ENCODE measurements at regions of chr17 and their contacts with region 1.

Region 1: DNA sequence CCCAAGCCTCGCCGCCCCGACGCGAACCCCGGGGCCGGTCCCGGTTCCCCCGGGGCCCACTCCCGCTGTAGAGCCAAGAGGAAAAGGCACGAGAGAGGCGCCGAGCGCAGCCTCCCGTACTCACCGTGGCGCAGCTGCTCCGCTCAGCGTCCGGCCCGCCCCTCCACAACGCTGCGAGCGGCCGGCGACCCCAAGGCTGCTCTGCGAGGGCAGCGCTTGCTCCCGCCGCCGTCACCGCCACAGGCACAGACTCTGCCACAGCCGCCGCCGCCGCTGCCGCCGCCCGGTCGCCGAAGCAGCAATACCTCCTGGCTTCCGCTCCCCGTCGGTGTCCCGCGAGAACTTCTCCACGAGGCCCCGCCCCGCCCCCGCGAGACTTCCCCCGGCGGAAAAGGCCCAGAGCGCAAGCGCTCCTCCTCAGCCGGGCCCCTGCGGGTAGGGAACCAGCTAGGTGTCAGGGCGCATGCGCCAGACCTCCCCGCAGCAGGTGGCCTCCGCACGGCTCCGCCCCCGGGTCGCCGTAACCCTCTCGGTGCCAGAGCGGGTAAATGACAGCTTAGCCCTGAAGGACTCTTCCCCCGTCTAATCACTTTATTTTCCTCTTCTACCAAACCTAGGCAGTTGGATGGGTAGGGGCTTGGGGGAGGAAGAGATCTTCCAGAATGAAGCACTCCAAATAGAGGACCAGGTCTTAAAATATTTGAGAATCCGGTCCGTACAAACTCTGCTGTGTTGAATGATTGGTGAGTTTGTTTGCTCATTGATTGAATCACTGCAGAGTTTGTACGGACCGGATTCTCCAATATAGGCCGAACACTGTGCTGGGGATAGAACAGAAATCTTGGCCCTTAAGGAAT is at the start of gene GRB2:
- DNase-seq: peak; percentile 100
- ATAC-seq: peak; percentile 81
- H3K4me3 Mint-ChIP-seq: peak within 1 kb of the TSS; percentile 99
- H3K27ac Mint-ChIP-seq: peak within 1 kb of the TSS; percentile 97
- H3K4me1 Mint-ChIP-seq: peaks cover 43% of the 10 kb centered on the region
- H3K27me3 Mint-ChIP-seq: no peaks in the 10 kb centered on the region
- CTCF ChIP-seq: no peak
- total RNA-seq, gene GRB2: 307 and 320 TPM in 2 replicates

Region 2: DNA sequence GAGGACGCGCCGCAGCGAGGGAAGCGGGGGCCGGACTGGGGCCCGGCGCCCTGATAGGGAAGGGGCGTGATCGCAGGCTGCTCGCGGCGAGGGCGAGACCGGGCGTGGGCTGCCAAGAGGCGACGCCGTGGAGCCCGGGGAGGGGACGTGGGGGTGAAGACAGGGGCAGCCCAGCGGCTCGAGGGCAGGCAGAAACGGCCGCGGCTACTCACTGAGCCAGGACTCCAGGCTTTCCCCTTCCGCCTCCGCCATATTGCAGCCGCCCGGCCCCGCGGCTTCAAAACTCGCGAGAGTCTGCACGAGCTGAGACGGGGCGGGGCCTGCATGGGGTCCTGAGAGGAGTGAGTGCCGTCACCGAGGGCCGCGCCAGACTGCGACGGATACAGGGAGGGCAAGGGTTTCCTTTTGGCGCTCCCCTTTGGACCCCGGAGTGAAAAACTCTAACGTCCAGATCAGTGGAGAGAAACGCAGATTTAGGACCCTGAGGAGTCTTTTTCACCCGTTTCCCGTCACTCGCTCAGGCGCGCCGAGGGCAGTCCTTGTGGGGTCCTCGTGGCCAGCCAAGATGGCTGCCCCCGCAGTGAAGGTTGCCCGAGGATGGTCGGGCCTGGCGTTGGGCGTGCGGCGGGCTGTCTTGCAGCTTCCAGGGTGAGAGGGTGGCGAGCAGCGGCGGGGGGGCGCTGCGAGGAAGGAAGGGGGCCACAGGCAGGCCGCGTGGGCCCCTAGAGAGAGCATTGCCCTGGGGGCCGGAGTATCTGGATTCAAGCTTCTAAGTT is 144.1 kb before region 1 on chr17 and contains the starts of genes GGA3 and MRPS7:
- CTCF ChIA-PET with region 1: no interaction called
- POLR2A ChIA-PET with region 1: interaction called, 22 read pairs
- intact Hi-C with region 1: loop called (anchors 1 kb)
- DNase-seq: peak; percentile 93
- ATAC-seq: peak; percentile 97
- H3K4me3 Mint-ChIP-seq: peak within 1 kb of the TSS; percentile 99
- H3K27ac Mint-ChIP-seq: peak within 1 kb of the TSS; percentile 99
- H3K4me1 Mint-ChIP-seq: peaks cover 56% of the 10 kb centered on the region
- H3K27me3 Mint-ChIP-seq: no peaks in the 10 kb centered on the region
- CTCF ChIP-seq: no peak
- total RNA-seq, gene GGA3: 116 and 119 TPM in 2 replicates
- total RNA-seq, gene MRPS7: 67.6 and 71.3 TPM in 2 replicates

Region 3: GRCh38 chr17:75313941-75314551 is 91.5 kb before region 1 on chr17:
- CTCF ChIA-PET with region 1: interaction called, 3 read pairs
- POLR2A ChIA-PET with region 1: interaction called, 16 read pairs
- intact Hi-C with region 1: no loop called
- DNase-seq: no peak
- ATAC-seq: peak; percentile 42
- H3K4me3 Mint-ChIP-seq: no peak overlapping the region
- H3K27ac Mint-ChIP-seq: peak overlapping the region; percentile 89
- H3K4me1 Mint-ChIP-seq: peaks cover 77% of the 10 kb centered on the region
- H3K27me3 Mint-ChIP-seq: no peaks in the 10 kb centered on the region
- CTCF ChIP-seq: no peak

Region 4: DNA sequence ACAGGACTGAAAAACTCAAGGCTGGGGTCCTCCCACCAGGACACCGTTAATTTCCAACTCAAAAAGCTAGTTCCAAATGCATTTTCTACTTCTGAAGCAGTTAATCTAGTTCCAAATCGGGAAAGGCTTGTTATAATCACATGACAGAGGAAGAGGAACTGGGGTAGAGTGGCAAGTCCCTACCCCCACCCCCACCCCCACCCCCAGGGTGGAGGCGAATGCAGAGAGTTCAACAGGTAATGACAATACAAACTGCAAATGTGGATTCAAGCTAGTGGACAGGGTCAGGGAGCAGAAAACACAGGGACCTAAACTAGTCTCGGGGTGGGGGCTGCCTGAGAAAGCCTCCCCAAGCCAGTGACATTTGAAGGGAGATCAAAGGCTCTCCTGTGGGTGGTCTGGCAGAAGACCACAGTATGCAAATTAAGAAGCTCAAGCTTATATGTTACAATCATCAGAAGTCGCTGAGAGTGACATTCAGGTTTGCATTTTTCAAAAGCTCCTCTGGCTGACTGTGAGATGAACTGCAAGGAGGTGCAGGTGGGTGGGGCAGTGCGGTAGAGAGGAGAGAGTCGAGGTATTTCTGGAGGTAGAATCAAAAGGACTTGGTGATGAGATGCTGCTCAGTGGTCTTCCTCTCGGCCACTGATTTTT is 60.0 kb before region 1 on chr17:
- CTCF ChIA-PET with region 1: interaction called, 5 read pairs
- POLR2A ChIA-PET with region 1: interaction called, 42 read pairs
- intact Hi-C with region 1: loop called (anchors 1 kb)
- DNase-seq: peak; percentile 63
- ATAC-seq: peak; percentile 83
- H3K4me3 Mint-ChIP-seq: peak overlapping the region; percentile 89
- H3K27ac Mint-ChIP-seq: peak overlapping the region; percentile 92
- H3K4me1 Mint-ChIP-seq: peaks cover 97% of the 10 kb centered on the region
- H3K27me3 Mint-ChIP-seq: no peaks in the 10 kb centered on the region
- CTCF ChIP-seq: no peak

Region 5: GRCh38 chr17:75456417-75457046 is 50.9 kb after region 1 on chr17 and contains the start of gene TMEM94:
- CTCF ChIA-PET with region 1: no interaction called
- POLR2A ChIA-PET with region 1: interaction called, 10 read pairs
- intact Hi-C with region 1: loop called (anchors 2 kb)
- DNase-seq: peak; percentile 74
- ATAC-seq: peak; percentile 94
- H3K4me3 Mint-ChIP-seq: peak within 1 kb of the TSS; percentile 91
- H3K27ac Mint-ChIP-seq: peak within 1 kb of the TSS; percentile 88
- H3K4me1 Mint-ChIP-seq: peaks cover 41% of the 10 kb centered on the region
- H3K27me3 Mint-ChIP-seq: no peaks in the 10 kb centered on the region
- CTCF ChIP-seq: no peak
- total RNA-seq, gene TMEM94: 80.3 and 86.6 TPM in 2 replicates